ENCODE measurements at regions of chrX and their contacts with region 1.

Region 1: DNA sequence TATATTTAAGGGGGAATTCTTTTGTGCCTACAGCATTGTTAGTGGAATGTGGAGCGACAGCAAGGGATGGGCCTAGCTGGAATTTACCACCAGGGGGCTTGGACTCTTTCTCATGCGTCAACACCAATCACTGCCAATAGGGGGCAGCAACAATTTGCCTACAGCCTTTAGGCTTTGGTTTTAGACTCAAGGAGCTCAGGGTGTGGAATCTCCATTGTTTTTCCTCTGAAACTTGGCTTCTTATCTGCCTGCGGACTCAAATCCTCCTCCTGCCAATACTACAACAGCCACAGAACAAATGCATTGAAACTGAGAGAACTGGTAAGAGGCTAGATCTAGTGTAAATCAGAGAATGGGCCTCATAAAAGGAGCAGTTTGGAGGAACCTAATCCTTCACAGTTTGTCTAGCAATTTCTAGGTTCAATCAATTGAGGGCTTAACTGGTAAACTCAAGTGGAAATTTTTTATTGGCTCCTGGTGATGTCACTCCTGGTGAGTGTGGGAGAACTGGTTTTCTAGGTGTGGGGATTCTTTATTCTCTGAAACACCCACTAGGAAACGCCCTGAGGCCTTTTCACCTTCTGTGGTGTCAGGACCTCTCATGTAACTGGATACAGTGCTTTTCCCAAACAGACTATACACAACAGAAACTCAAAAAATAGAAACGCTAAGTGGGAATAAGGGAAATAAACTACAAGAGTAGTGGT is 27.9 kb upstream of the TMSB4X start:
- DNase-seq: peak; percentile 86
- H3K4me3 Mint-ChIP-seq: peak overlapping the region; percentile 43
- H3K27ac Mint-ChIP-seq: peak overlapping the region; percentile 99
- H3K4me1 Mint-ChIP-seq: peaks cover 55% of the 10 kb centered on the region
- H3K27me3 Mint-ChIP-seq: no peaks in the 10 kb centered on the region
- CTCF ChIP-seq: peak; percentile 97

Region 2: GRCh38 chrX:12814420-12814819 is 132.6 kb before region 1 on chrX:
- CTCF ChIA-PET with region 1: interaction called, 14 read pairs
- intact Hi-C with region 1: no loop called
- DNase-seq: peak; percentile 60
- H3K4me3 Mint-ChIP-seq: no peak overlapping the region
- H3K27ac Mint-ChIP-seq: no peak overlapping the region
- H3K4me1 Mint-ChIP-seq: no peaks in the 10 kb centered on the region
- H3K27me3 Mint-ChIP-seq: no peaks in the 10 kb centered on the region
- CTCF ChIP-seq: peak; percentile 27

Region 3: DNA sequence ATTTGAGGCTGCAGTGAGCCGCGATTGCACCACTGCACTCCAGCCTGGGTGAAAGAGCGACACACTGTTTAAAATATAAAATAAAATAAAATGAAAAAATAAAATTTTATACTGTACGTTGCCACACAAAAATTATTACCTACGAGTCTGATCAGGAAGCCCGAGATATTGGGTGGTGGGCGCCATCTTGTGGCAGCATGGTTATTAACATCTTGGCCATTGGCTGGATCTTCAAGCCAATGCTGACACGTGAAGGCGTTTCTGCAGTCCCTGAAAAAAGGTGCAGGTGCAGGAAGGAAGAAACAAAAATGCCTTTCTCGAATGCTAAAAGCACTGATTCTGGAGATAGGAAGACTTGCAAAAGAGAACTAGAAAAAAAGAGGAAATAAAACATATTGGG is 45.5 kb before region 1 on chrX:
- CTCF ChIA-PET with region 1: no interaction called
- intact Hi-C with region 1: no loop called
- DNase-seq: peak; percentile 76
- H3K4me3 Mint-ChIP-seq: no peak overlapping the region
- H3K27ac Mint-ChIP-seq: no peak overlapping the region
- H3K4me1 Mint-ChIP-seq: peaks cover 8% of the 10 kb centered on the region
- H3K27me3 Mint-ChIP-seq: no peaks in the 10 kb centered on the region
- CTCF ChIP-seq: peak; percentile 27

Region 4: DNA sequence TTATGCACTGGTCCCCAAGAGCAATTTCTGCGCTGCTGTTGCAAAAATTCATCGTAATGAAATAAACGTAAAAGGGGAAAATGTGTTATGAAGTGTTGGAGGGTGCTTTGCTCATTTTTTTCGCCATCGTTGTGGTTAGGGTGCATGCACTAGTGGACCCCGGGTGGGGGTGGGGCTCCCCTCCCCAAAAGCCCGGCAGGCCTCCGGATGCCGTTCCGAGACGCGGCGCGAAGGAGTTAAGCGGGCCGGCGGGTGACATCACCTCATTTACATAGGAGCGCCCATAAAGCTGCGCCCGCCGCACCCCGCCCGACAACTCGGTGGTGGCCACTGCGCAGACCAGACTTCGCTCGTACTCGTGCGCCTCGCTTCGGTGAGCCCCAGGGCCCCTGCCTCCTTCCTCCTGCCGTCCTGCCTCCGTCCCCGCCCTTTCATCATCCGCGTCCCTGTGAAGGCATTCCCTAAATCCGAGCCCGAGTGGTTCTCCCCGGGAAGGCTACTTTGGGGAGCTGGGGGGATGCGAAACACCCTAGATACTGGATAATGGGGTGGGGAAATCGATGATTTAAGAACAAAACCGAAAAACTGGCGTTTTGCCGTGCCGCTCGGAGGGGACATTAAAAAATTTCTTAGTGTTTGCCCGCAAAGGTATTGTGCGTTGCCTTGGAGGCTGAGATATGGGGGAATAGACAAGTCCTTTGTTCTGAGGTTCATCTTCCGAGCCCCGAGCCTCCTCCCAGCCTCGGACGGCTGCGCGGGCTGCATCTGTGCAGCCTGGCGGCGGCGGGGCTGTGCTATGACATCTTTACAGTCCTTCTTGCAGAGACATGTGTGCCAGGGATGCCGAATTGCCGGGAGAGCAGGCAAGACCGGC is 28.0 kb after region 1 on chrX and contains the start of gene TMSB4X:
- CTCF ChIA-PET with region 1: interaction called, 19 read pairs
- intact Hi-C with region 1: loop called (anchors 1 kb)
- DNase-seq: peak; percentile 90
- H3K4me3 Mint-ChIP-seq: peak within 1 kb of the TSS; percentile 85
- H3K27ac Mint-ChIP-seq: peak within 1 kb of the TSS; percentile 99
- H3K4me1 Mint-ChIP-seq: peaks cover 59% of the 10 kb centered on the region
- H3K27me3 Mint-ChIP-seq: no peaks in the 10 kb centered on the region
- CTCF ChIP-seq: no peak
- total RNA-seq, gene TMSB4X: 5,274 and 5,368 TPM in 2 replicates

Region 5: DNA sequence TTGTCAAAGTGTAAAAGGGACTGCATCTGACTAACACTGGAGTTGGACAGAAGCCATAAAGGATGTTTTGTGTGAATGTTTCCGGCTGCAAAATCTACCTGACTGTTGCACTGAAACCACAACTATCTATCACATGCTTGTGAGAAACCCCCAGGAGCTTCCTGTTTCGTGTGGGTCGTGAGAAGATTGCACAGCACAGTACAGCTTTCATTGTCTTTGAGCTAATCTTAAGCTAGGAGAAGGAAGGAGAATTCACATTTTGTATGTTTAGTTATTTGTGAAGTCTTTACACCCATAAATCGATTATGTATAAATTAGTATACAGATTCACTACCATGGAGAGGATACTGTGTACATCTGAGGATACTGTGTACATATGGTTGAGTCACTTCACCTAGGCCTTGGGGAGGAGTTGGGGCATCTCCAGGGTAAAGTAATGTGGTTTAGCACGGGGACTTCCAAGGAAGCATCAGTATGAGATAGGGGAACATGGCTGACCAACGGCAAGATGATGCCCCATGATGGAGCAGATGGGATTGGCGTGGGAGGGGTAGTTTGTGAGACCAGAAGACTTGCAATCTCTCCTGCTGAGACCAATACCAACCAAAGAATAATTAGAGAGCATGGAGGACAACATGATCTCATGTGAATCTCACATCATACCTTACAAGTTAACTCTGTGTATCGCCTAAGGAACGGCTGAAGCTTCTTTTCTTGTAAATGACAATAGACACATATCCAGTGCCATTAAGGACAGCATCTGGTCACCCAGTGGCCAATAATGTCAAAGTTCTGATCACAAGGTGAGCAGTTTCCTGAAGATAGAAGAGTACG is 140.5 kb after region 1 on chrX:
- CTCF ChIA-PET with region 1: interaction called, 10 read pairs
- intact Hi-C with region 1: no loop called
- DNase-seq: peak; percentile 50
- H3K4me3 Mint-ChIP-seq: no peak overlapping the region
- H3K27ac Mint-ChIP-seq: peak overlapping the region; percentile 95
- H3K4me1 Mint-ChIP-seq: peaks cover 25% of the 10 kb centered on the region
- H3K27me3 Mint-ChIP-seq: no peaks in the 10 kb centered on the region
- CTCF ChIP-seq: no peak

Region 6: DNA sequence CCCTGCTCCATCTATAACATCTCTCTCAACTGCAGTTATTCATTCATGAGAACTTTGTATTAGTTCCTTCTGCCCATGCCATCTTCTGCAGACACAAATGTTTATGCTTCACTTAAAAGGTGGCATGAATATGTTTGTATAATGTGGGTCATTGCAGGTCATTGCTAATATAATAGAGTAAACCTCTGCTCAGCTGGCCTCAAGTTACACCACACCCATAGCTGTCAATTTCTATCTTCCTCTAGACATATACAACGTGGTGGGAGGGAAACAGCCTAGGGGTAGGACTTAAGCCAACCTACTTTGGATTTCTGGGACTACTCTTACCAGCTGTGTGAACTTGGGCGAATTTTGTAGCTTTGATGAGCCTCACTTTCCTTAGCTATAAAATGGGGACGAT is 243.1 kb after region 1 on chrX:
- CTCF ChIA-PET with region 1: no interaction called
- intact Hi-C with region 1: no loop called
- DNase-seq: no peak
- H3K4me3 Mint-ChIP-seq: no peak overlapping the region
- H3K27ac Mint-ChIP-seq: no peak overlapping the region
- H3K4me1 Mint-ChIP-seq: peaks cover 32% of the 10 kb centered on the region
- H3K27me3 Mint-ChIP-seq: no peaks in the 10 kb centered on the region
- CTCF ChIP-seq: no peak

Region 7: DNA sequence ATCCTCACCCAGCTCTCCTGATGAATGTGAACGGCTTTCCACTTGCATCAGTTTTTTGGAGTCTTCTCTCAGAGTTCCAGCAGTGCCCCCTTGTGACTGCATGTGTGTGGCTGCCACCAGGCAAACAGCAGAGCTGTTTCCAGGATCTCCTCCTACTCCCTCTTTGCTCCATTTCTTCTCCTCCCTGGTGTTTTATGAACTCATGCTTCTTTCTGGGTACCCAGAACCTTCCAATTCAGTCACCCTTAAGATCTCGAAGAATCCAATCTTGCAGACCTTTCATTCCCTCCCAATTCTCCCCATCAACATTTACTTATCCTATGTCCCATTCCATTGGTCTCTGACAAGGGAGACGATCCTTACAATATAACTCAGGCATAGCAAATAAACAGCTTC is 699.2 kb after region 1 on chrX:
- CTCF ChIA-PET with region 1: interaction called, 7 read pairs
- intact Hi-C with region 1: loop called (anchors 10 kb)
- DNase-seq: peak; percentile 71
- H3K4me3 Mint-ChIP-seq: no peak overlapping the region
- H3K27ac Mint-ChIP-seq: peak overlapping the region; percentile 24
- H3K4me1 Mint-ChIP-seq: peaks cover 27% of the 10 kb centered on the region
- H3K27me3 Mint-ChIP-seq: no peaks in the 10 kb centered on the region
- CTCF ChIP-seq: peak; percentile 34